CD14-positive monocyte (primary cell): ENCODE measurements at regions of chr2 and their contacts with region 1.

Region 1: DNA sequence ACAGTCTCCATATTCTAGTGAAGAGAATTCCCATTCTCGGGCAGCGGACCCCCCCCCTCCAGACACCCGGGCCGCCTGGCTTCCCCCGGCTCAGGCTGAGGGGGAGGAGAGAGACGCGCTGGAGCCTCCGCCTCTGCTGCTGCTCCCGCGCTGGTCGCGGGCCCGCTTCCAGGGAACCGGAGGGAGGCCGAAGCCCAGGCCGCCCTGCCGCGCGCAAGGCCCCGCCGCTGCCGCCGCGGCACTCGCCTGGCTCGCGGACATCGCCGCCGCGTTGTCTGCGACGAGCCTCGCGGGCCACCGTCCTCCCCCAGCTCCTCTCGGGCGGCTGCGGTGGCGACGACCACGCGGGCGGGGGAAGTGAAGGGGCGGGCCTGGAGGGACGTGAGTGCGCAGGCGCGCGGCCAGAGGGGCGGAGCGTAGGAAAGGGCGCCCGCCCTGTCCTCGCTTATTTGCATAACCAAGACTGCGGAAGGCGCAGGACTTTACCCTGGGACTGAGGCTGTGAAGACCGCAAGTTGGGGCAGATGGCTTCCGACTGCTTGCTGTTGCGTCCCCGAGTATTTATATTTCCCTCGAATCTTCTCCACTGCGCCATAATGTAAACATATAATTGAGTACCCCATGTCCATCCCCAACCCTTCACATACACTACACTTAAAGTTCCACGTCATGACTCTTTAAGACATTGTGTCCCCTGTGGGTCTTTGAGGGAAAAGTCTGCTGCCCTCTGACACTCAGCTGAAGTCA is at the start of gene ARL5A:
- DNase-seq: peak; percentile 91 to 97 (median 96)
- H3K4me3 ChIP-seq: peak within 1 kb of the TSS; percentile 94 to 98 (median 95)
- H3K4me3 Mint-ChIP-seq: peak within 1 kb of the TSS; percentile 96 to 98
- H3K27ac ChIP-seq: peak within 1 kb of the TSS; percentile 53 to 93
- H3K27ac Mint-ChIP-seq: peak within 1 kb of the TSS; percentile 81 to 96 (median 95)
- H3K4me1 ChIP-seq: peaks cover 22 to 23% of the 10 kb centered on the region in 2 donors
- H3K4me1 Mint-ChIP-seq: peaks cover 44% of the 10 kb centered on the region
- H3K27me3 ChIP-seq: no peaks in the 10 kb centered on the region
- H3K27me3 Mint-ChIP-seq: no peaks in the 10 kb centered on the region
- CTCF ChIP-seq: no peak
- polyA plus RNA-seq, gene ARL5A: 21.3 to 85.8 (median 74.5) TPM

Region 2: GRCh38 chr2:151765760-151766410 is 62.4 kb before region 1 on chr2:
- intact Hi-C with region 1: no loop called
- DNase-seq: no peak
- H3K4me3 ChIP-seq: no peak overlapping the region
- H3K4me3 Mint-ChIP-seq: no peak overlapping the region
- H3K27ac ChIP-seq: no peak overlapping the region
- H3K27ac Mint-ChIP-seq: peak overlapping the region in 2 of 7 donors; percentile 39 to 65
- H3K4me1 ChIP-seq: no peaks in the 10 kb centered on the region
- H3K4me1 Mint-ChIP-seq: peaks cover 3% of the 10 kb centered on the region
- H3K27me3 ChIP-seq: no peaks in the 10 kb centered on the region
- H3K27me3 Mint-ChIP-seq: no peaks in the 10 kb centered on the region
- CTCF ChIP-seq: no peak

Region 3: GRCh38 chr2:151886241-151886640 is 57.9 kb after region 1 on chr2:
- intact Hi-C with region 1: loop called in 1 of 2 experiments (anchors 5 kb)
- DNase-seq: peak; percentile 56 to 82 (median 77)
- H3K4me3 ChIP-seq: peak overlapping the region in 1 of 3 experiments; percentile 15
- H3K4me3 Mint-ChIP-seq: no peak overlapping the region
- H3K27ac ChIP-seq: peak overlapping the region; percentile 21 to 73
- H3K27ac Mint-ChIP-seq: peak overlapping the region; percentile 81 to 98 (median 92)
- H3K4me1 ChIP-seq: peaks cover 17% of the 10 kb centered on the region in 2 donors
- H3K4me1 Mint-ChIP-seq: peaks cover 24% of the 10 kb centered on the region
- H3K27me3 ChIP-seq: no peaks in the 10 kb centered on the region
- H3K27me3 Mint-ChIP-seq: peaks cover 0 to 1% (median 0%) of the 10 kb centered on the region in 3 donors
- CTCF ChIP-seq: no peak

Region 4: GRCh38 chr2:151904807-151905206 is 76.5 kb after region 1 on chr2:
- intact Hi-C with region 1: no loop called
- DNase-seq: peak; percentile 49 to 73 (median 58)
- H3K4me3 ChIP-seq: peak overlapping the region in 1 of 3 experiments; percentile 35
- H3K4me3 Mint-ChIP-seq: peak overlapping the region in 1 of 2 donors; percentile 70
- H3K27ac ChIP-seq: peak overlapping the region; percentile 65 to 76
- H3K27ac Mint-ChIP-seq: peak overlapping the region; percentile 66 to 91 (median 87)
- H3K4me1 ChIP-seq: peaks cover 54 to 65% of the 10 kb centered on the region in 2 donors
- H3K4me1 Mint-ChIP-seq: peaks cover 51% of the 10 kb centered on the region
- H3K27me3 ChIP-seq: no peaks in the 10 kb centered on the region
- H3K27me3 Mint-ChIP-seq: no peaks in the 10 kb centered on the region
- CTCF ChIP-seq: no peak

Region 5: DNA sequence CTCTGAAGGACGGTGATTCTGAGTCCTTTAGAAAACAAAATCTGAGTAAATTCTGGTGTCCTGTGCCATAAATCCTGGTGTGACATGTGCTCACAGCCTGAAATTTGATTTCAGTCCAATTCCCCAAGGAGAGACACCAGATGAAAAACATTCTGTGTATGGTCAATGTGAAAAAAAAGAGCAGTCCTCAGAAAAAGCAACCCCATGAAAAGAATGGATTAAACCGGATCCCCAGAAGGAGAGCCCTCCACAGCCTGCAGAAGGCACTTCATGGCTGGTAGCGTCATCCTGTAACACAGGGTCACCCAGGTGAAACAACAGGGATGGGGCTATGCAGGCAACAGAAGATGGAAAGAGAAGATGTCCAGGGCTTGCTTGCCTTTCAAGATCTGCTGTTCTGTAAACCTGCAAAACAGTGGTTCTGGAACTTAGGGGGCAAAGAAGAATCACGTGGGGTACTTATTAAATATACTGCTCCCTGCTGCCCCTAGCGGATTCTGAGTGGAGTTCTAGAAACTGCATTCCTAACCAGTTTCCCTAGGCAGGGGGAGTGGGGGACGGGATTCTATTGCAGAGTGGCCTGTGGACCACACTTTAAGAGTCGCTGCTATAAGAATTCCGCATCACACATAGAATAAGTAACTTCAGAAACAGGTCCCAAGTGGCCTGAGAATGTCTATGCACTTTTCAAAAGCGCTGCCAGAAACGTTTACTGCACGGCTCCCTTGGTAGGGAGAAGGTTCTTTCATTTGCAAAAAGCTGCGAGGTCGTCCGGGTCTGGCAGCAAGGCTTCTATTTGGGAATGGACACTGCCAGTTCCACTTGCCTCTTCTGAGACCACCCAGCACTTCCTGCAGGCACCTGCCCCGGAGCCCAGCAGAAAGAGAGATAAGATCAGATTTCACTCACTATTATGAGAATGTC is 118.8 kb after region 1 on chr2:
- intact Hi-C with region 1: loop called (anchors 10 kb)
- DNase-seq: peak; percentile 29 to 66 (median 55)
- H3K4me3 ChIP-seq: peak overlapping the region; percentile 48 to 91 (median 79)
- H3K4me3 Mint-ChIP-seq: peak overlapping the region; percentile 78 to 90
- H3K27ac ChIP-seq: peak overlapping the region; percentile 59 to 79
- H3K27ac Mint-ChIP-seq: peak overlapping the region; percentile 61 to 91 (median 80)
- H3K4me1 ChIP-seq: peaks cover 27 to 30% of the 10 kb centered on the region in 2 donors
- H3K4me1 Mint-ChIP-seq: peaks cover 34% of the 10 kb centered on the region
- H3K27me3 ChIP-seq: no peaks in the 10 kb centered on the region
- H3K27me3 Mint-ChIP-seq: peaks cover 0 to 2% (median 0%) of the 10 kb centered on the region in 3 donors
- CTCF ChIP-seq: peak; percentile 92

Region 6: DNA sequence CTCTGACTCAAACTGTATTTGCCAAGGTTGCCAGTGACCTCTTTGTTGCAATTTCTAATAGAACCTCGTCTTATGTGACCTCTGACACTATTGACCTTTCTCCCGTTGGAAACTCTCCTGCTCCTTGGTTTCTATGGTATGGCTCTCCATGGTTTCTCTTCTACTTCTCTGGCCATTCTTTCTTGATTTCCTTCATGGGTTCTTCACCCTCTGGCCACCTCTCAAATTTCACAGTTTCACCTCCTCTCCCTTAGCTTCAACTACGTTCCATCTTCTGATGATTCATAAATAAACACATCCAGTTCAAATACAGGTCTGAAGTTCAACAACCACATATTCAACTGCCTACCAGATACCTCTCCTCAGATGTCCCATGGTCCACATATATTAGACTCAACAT is 161.1 kb after region 1 on chr2:
- intact Hi-C with region 1: no loop called
- DNase-seq: no peak
- H3K4me3 ChIP-seq: no peak overlapping the region
- H3K4me3 Mint-ChIP-seq: no peak overlapping the region
- H3K27ac ChIP-seq: no peak overlapping the region
- H3K27ac Mint-ChIP-seq: no peak overlapping the region
- H3K4me1 ChIP-seq: no peaks in the 10 kb centered on the region
- H3K4me1 Mint-ChIP-seq: peaks cover 3% of the 10 kb centered on the region
- H3K27me3 ChIP-seq: no peaks in the 10 kb centered on the region
- H3K27me3 Mint-ChIP-seq: no peaks in the 10 kb centered on the region
- CTCF ChIP-seq: no peak

Region 7: GRCh38 chr2:152611458-152612231 is 783.3 kb after region 1 on chr2:
- intact Hi-C with region 1: no loop called
- DNase-seq: peak; percentile 89 to 97 (median 95)
- H3K4me3 ChIP-seq: peak overlapping the region; percentile 28 to 77 (median 50)
- H3K4me3 Mint-ChIP-seq: peak overlapping the region; percentile 73 to 90
- H3K27ac ChIP-seq: peak overlapping the region; percentile 93 to 98
- H3K27ac Mint-ChIP-seq: peak overlapping the region; percentile 97 to 100 (median 99)
- H3K4me1 ChIP-seq: peaks cover 47 to 54% of the 10 kb centered on the region in 2 donors
- H3K4me1 Mint-ChIP-seq: peaks cover 51% of the 10 kb centered on the region
- H3K27me3 ChIP-seq: no peaks in the 10 kb centered on the region
- H3K27me3 Mint-ChIP-seq: no peaks in the 10 kb centered on the region
- CTCF ChIP-seq: no peak

Region 8: DNA sequence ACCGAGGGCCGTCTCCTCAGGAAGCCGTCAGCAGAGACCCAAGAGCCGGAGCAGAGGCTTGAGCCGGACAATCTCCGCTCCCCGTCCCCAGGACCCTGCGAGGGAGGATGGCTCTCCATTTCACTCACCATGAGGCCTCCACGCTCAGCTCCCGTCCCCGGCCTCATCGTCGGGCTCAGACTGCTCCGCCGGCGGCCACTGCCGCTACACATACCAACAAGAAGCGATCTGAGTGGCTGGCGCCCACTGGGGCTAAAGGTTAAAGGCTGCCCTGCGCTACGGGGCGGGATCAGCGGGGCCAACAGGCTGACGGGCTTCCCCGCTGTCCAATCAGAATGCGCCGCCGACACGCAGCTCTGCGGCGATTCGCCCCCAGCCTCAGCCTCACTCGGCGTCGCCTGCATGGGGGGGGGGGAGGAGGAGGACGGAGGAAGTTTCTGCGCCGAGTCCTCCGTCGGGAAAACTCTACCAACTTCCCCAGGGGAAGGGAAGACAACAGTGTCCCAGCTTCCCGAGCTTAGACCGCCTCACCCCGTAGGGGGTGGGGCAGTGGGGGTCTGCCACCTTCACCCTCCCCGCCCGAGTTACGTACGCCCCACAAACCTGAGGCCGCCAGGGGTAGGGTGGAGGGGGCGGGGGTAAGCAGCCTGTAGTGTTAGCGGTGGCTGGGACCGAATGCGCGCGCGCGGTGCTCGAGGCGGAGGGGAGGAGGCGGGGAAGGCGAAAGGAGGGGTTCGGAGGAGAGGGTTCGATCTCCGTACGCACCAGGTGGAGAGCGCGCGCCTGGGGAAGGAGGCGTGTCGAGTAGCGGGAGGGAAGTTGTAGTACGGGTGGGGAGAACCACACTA is 889.1 kb after region 1 on chr2 and contains the start of gene PRPF40A:
- intact Hi-C with region 1: loop called in 1 of 2 experiments (anchors 5 kb)
- DNase-seq: peak; percentile 98 to 99 (median 99)
- H3K4me3 ChIP-seq: peak within 1 kb of the TSS; percentile 88 to 96 (median 95)
- H3K4me3 Mint-ChIP-seq: peak within 1 kb of the TSS; percentile 97 to 100
- H3K27ac ChIP-seq: peak within 1 kb of the TSS; percentile 97 to 98
- H3K27ac Mint-ChIP-seq: peak within 1 kb of the TSS; percentile 94 to 99 (median 98)
- H3K4me1 ChIP-seq: peaks cover 25 to 36% of the 10 kb centered on the region in 2 donors
- H3K4me1 Mint-ChIP-seq: peaks cover 38% of the 10 kb centered on the region
- H3K27me3 ChIP-seq: no peaks in the 10 kb centered on the region
- H3K27me3 Mint-ChIP-seq: peaks cover 0 to 2% (median 0%) of the 10 kb centered on the region in 3 donors
- CTCF ChIP-seq: no peak
- polyA plus RNA-seq, gene PRPF40A: 56.0 to 95.4 (median 66.6) TPM